ENCODE measurements at regions of chr10 and their contacts with region 1.

Region 1: GRCh38 chr10:51960494-51960895 is 261.1 kb upstream of the CSTF2T start:
- DNase-seq: peak; percentile 84
- H3K4me3 ChIP-seq: peak overlapping the region; percentile 9; the same call in 1 of the 2 replicates
- H3K27ac ChIP-seq: no peak overlapping the region
- H3K4me1 ChIP-seq: peaks cover 13% of the 10 kb centered on the region
- H3K27me3 ChIP-seq: no peaks in the 10 kb centered on the region

Region 2: DNA sequence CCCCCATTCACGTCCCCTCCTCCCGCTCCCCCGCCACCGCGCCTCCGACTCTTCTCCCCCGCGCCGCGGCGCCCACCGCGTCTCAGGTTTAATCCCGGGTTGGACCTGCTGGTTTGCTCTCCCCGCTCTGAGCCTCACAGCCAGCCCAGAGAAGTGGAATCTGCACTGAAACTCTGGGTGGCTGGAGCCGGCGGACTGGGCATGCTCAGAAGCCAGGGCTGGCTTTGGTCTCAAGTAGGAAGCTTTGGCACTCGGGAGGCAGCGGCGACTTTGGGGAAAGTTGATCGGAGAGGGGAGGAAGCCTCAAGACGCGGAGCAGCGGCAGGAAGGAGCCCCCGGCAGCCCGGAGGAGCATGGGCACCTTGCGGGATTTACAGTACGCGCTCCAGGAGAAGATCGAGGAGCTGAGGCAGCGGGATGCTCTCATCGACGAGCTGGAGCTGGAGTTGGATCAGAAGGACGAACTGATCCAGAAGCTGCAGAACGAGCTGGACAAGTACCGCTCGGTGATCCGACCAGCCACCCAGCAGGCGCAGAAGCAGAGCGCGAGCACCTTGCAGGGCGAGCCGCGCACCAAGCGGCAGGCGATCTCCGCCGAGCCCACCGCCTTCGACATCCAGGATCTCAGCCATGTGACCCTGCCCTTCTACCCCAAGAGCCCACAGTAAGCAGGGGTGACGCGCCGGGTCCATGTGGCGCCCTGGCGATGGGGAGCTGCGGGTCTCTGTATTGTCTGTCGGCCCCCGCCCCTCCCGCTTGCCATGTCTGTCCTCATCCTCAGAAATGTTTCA is 886.1 kb before region 1 on chr10 and contains the start of gene PRKG1:
- in situ Hi-C with region 1: loop called (anchors 25 kb)
- DNase-seq: peak; percentile 89
- H3K4me3 ChIP-seq: peak within 1 kb of the TSS; percentile 83
- H3K27ac ChIP-seq: peak within 1 kb of the TSS; percentile 42
- H3K4me1 ChIP-seq: peaks cover 15% of the 10 kb centered on the region
- H3K27me3 ChIP-seq: no peaks in the 10 kb centered on the region
- total RNA-seq, gene PRKG1: 21.8 TPM in 2 replicates

Region 3: GRCh38 chr10:51397695-51398094 is 562.8 kb before region 1 on chr10:
- in situ Hi-C with region 1: no loop called
- DNase-seq: peak; percentile 88
- H3K4me3 ChIP-seq: no peak overlapping the region
- H3K27ac ChIP-seq: no peak overlapping the region
- H3K4me1 ChIP-seq: peaks cover 12% of the 10 kb centered on the region
- H3K27me3 ChIP-seq: no peaks in the 10 kb centered on the region

Region 4: DNA sequence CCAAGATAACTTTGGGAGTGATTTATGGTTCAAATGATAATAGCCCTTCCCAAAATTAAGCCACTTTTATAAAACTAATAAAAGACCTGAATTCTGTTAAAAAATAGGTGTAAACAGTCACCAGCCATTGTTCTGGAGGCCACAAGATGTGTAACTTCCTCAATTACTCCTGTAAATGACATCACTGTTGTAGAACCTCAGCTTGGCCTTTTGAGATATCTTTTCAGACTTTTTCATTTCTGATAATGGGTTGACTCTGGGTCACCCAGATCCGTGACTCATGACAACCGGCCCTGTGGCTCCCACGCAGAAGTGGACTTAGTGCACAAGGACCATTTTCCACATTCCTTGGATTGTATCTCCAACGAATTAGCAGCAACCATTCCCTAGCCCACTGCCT is 460.2 kb after region 1 on chr10:
- in situ Hi-C with region 1: no loop called
- DNase-seq: peak; percentile 2
- H3K4me3 ChIP-seq: no peak overlapping the region
- H3K27ac ChIP-seq: no peak overlapping the region
- H3K4me1 ChIP-seq: no peaks in the 10 kb centered on the region
- H3K27me3 ChIP-seq: no peaks in the 10 kb centered on the region

Measured in GM23248 (cell line).